ENCODE measurements at regions of chr12 and their contacts with region 1.

Region 1: GRCh38 chr12:19198272-19198671 is 68.7 kb downstream of the PLEKHA5 start:
- DNase-seq: no peak

Region 2: GRCh38 chr12:18415227-18415626 is 783.0 kb before region 1 on chr12:
- intact Hi-C with region 1: no loop called
- DNase-seq: no peak

Region 3: DNA sequence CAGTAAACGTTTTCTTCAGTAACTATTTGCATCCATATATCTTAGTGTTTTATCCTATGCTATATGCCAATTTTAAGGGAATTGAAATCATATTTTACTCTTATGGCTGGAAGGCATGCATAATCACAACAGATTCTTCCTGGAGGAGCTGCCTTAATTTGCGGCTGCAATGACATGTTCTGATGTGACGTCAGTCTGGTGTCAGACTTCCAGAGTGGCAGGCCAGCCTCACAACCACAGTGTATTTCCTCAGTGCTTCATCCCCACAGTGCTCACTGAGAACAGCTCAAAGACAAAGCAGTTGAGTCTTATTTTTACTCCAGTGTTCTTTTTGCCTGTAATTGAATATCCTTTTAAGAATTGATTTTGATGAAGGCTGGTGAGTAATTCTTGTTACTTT is 38.4 kb after region 1 on chr12:
- intact Hi-C with region 1: loop called (anchors 5 kb)
- DNase-seq: no peak

Measured in cardiac septum (tissue), 1 donor.